Activated B cell treated with CpG ODN at 0.5 μM for 24 hours (primary cell): ENCODE measurements at regions of chr11 and their contacts with region 1.

Region 1: GRCh38 chr11:66001942-66002647 is at the starts of genes BANF1 and EIF1AD:
- DNase-seq: peak; percentile 86
- ATAC-seq: peak; percentile 82
- H3K4me3 Mint-ChIP-seq: peak within 1 kb of the TSS; percentile 100
- H3K27ac Mint-ChIP-seq: peak within 1 kb of the TSS; percentile 98
- H3K4me1 Mint-ChIP-seq: peaks cover 36% of the 10 kb centered on the region
- H3K27me3 Mint-ChIP-seq: no peaks in the 10 kb centered on the region
- CTCF ChIP-seq: no peak
- total RNA-seq, gene BANF1: 220 and 228 TPM in 2 replicates
- total RNA-seq, gene EIF1AD: 50.7 and 58.9 TPM in 2 replicates

Region 2: DNA sequence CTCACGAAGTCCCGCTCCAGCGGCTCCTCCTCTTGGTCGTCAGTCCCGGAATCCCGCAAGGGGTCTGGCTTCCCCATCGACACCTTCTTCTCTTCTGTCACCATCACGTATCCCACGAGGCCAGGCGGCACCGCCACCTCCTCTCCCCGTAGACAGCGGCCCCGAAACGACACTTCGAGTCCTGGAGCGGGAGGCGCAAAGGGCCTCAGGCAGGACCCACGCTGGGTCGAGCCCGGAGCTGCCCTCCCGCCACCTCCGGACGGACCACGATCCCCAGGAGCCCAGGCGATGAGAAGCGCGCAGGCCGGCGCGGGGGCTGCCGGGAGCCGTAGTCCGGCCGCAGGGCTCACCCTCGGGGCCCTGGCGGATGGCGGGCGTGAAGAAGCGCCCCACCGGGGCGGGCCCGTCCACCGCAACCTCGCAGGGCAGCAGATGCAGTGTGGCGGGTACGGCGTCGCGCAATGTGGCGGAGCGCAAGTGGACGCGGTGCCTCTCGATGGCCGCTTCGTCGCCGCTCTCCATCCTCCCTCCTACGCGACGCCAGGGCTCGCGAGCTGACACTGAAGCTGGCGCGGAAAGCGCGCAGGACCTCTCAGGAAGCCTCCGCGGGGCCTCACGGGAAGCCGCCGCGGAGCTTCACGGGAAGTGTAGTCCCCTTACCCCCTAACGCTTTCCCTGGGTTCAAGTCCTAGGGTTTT is 281.7 kb before region 1 on chr11 and contains the start of gene RNASEH2C:
- CTCF ChIA-PET with region 1: no interaction called
- POLR2A ChIA-PET with region 1: interaction called, 13 read pairs
- intact Hi-C with region 1: no loop called
- DNase-seq: peak; percentile 75
- ATAC-seq: peak; percentile 92
- H3K4me3 Mint-ChIP-seq: peak within 1 kb of the TSS; percentile 94
- H3K27ac Mint-ChIP-seq: peak within 1 kb of the TSS; percentile 83
- H3K4me1 Mint-ChIP-seq: peaks cover 29% of the 10 kb centered on the region
- H3K27me3 Mint-ChIP-seq: no peaks in the 10 kb centered on the region
- CTCF ChIP-seq: no peak
- total RNA-seq, gene RNASEH2C: 85.3 and 91.4 TPM in 2 replicates

Region 3: DNA sequence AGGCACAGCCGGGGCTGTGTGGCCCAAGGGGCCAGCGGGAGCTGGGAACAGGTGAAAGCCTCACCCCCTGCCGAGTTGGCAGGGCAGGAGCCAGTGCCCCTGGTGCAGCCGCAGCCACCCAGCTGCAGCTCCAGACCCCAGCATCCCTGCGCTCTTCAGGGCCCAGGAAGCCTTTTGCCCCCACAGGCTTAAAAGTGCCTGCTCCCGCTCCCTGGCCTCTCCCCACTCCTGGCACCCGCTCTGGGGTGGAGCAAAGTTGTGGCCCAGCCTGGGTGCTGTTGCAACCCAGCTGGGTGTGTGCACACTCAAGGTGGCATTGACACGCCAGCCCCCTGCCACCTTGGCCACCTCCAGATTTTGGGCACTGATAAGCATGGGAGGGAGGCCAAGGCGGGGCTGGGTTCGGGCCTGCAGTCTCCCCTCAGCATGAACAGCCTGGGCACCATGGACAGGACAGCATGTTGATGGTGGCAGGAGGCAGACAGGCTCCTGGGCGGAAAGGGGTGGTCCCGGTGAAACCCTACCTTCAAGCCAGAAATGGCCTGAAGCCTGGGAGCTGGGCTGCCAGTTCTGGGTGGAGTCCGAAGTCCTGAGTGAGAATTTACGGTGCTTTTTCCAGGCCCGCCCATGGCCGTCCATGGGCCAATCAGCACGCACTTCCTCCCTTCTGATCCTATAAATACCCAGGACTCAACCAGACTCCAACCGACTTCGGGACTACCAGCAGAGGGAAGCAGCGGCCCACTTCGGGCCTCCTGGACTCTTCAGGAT is 258.0 kb before region 1 on chr11:
- CTCF ChIA-PET with region 1: no interaction called
- POLR2A ChIA-PET with region 1: no interaction called
- intact Hi-C with region 1: no loop called
- DNase-seq: no peak
- ATAC-seq: no peak
- H3K4me3 Mint-ChIP-seq: no peak overlapping the region
- H3K27ac Mint-ChIP-seq: no peak overlapping the region
- H3K4me1 Mint-ChIP-seq: peaks cover 6% of the 10 kb centered on the region
- H3K27me3 Mint-ChIP-seq: peaks cover 4% of the 10 kb centered on the region
- CTCF ChIP-seq: no peak

Region 4: DNA sequence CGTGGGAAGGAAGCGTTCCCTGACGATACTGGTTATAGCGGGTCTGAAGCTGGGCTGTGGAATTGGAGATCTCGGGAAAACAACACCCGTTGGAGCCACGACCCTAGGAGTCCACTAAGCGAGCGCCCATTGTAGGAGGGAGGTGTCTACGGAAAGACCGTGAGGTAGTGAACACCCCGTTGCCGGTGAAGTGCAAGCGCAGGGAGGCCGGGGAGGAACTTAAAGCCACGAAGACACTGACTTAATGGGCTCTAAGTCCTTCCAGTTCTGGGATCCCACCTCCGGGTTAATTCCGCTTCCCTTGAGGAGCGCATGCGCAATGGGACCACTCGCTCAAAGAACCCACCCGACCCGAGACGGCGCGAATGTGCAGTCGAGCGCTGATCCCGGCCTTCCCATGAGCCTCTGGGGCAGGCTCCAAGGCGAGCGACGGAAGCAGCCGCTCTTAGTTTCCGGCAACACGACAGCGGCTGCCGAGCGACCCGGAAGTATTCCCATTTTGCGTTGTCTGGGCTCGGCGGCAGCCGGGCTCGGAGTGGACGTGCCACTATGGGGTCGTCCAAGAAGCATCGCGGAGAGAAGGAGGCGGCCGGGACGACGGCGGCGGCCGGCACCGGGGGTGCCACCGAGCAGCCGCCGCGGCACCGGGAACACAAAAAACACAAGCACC is 40.7 kb before region 1 on chr11 and contains the start of gene SART1:
- CTCF ChIA-PET with region 1: no interaction called
- POLR2A ChIA-PET with region 1: interaction called, 5 read pairs
- intact Hi-C with region 1: loop called (anchors 1 kb)
- DNase-seq: peak; percentile 85
- ATAC-seq: peak; percentile 89
- H3K4me3 Mint-ChIP-seq: peak within 1 kb of the TSS; percentile 97
- H3K27ac Mint-ChIP-seq: peak within 1 kb of the TSS; percentile 95
- H3K4me1 Mint-ChIP-seq: peaks cover 50% of the 10 kb centered on the region
- H3K27me3 Mint-ChIP-seq: no peaks in the 10 kb centered on the region
- CTCF ChIP-seq: no peak
- total RNA-seq, gene SART1: 86.6 and 92.3 TPM in 2 replicates

Region 5: GRCh38 chr11:66045177-66045639 is 43.1 kb after region 1 on chr11:
- CTCF ChIA-PET with region 1: interaction called, 10 read pairs
- POLR2A ChIA-PET with region 1: interaction called, 4 read pairs
- intact Hi-C with region 1: no loop called
- DNase-seq: peak; percentile 79
- ATAC-seq: peak; percentile 99
- H3K4me3 Mint-ChIP-seq: no peak overlapping the region
- H3K27ac Mint-ChIP-seq: no peak overlapping the region
- H3K4me1 Mint-ChIP-seq: peaks cover 9% of the 10 kb centered on the region
- H3K27me3 Mint-ChIP-seq: peaks cover 8% of the 10 kb centered on the region
- CTCF ChIP-seq: peak; percentile 63

Region 6: GRCh38 chr11:66222358-66223149 is 220.5 kb after region 1 on chr11:
- CTCF ChIA-PET with region 1: no interaction called
- POLR2A ChIA-PET with region 1: no interaction called
- intact Hi-C with region 1: loop called (anchors 1 kb)
- DNase-seq: peak; percentile 85
- ATAC-seq: peak; percentile 96
- H3K4me3 Mint-ChIP-seq: peak overlapping the region; percentile 64
- H3K27ac Mint-ChIP-seq: peak overlapping the region; percentile 99
- H3K4me1 Mint-ChIP-seq: peaks cover 20% of the 10 kb centered on the region
- H3K27me3 Mint-ChIP-seq: no peaks in the 10 kb centered on the region
- CTCF ChIP-seq: peak; percentile 93